Activated T-helper 2 cell treated with anti-CD3 and anti-CD28 coated beads, Interferon-gamma antibody, Interleukin-2, Interleukin-4, amounts not matched to agents 10 μg/mL and 5 μg/mL and 100 μg/mL, durations not matched to agents 14 hours and 24 hours and 36 hours (primary cell): ENCODE measurements at regions of chr2 and their contacts with region 1.

Region 1: GRCh38 chr2:317501-318424 is 29.9 kb upstream of the ALKAL2 start:
- DNase-seq: no peak
- H3K4me3 Mint-ChIP-seq: peak overlapping the region; percentile 55
- H3K27ac Mint-ChIP-seq: peak overlapping the region; percentile 88
- H3K4me1 Mint-ChIP-seq: peaks cover 31% of the 10 kb centered on the region
- H3K27me3 Mint-ChIP-seq: peaks cover 4% of the 10 kb centered on the region

Region 2: GRCh38 chr2:231521-232185 is 86.1 kb before region 1 on chr2:
- intact Hi-C with region 1: loop called (anchors 1 kb)
- DNase-seq: no peak
- H3K4me3 Mint-ChIP-seq: no peak overlapping the region
- H3K27ac Mint-ChIP-seq: peak overlapping the region; percentile 69
- H3K4me1 Mint-ChIP-seq: peaks cover 37% of the 10 kb centered on the region
- H3K27me3 Mint-ChIP-seq: no peaks in the 10 kb centered on the region

Region 3: DNA sequence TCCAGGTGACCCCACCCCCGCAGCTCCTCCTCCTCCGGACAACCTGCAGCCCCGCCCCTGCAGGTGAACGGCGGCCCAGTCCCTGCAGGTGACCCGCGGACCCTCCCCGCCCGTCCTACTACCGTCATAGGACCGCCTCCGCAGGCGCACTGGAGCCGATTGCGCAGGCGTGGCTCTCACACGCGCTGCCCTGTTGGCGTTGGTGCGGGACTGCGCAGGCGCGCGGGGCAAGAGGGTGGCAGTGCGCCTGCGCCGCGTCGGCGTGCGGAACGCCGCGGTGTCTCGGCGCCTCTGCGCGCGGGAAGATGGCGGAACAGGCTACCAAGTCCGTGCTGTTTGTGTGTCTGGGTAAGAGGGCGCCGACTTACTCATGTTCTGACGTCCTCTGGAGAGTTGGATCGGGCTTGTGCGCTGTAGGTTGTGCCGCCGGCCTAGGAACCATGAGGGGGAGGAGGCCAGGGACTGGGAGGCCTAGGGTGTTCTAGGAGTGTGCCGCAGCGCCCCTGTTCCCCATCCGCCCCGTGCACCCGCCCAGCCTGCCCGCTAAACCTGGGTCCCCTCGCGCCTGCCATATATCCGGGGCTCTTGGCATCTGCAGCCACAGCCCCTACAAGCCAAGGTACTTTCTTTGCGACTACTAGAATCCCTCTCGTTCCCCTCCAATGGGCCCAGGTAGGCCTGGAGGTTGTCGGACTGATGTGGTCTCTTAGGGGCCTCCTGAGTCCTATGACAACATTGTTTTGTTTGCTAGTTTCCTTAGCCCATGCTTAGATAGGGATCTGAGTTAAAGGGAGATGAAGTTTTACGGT is 52.9 kb before region 1 on chr2 and contains the start of gene ACP1:
- intact Hi-C with region 1: loop called (anchors 1 kb)
- DNase-seq: peak; percentile 93
- H3K4me3 Mint-ChIP-seq: peak within 1 kb of the TSS; percentile 93
- H3K27ac Mint-ChIP-seq: peak within 1 kb of the TSS; percentile 93
- H3K4me1 Mint-ChIP-seq: peaks cover 48% of the 10 kb centered on the region
- H3K27me3 Mint-ChIP-seq: no peaks in the 10 kb centered on the region
- total RNA-seq, gene ACP1: 168 and 177 TPM in 2 replicates

Region 4: GRCh38 chr2:393711-394696 is 76.2 kb after region 1 on chr2:
- intact Hi-C with region 1: loop called (anchors 5 kb)
- DNase-seq: peak; percentile 68
- H3K4me3 Mint-ChIP-seq: peak overlapping the region; percentile 67
- H3K27ac Mint-ChIP-seq: peak overlapping the region; percentile 72
- H3K4me1 Mint-ChIP-seq: peaks cover 25% of the 10 kb centered on the region
- H3K27me3 Mint-ChIP-seq: no peaks in the 10 kb centered on the region

Region 5: GRCh38 chr2:437762-438393 is 120.1 kb after region 1 on chr2:
- intact Hi-C with region 1: loop called (anchors 10 kb)
- DNase-seq: peak; percentile 68
- H3K4me3 Mint-ChIP-seq: peak overlapping the region; percentile 54
- H3K27ac Mint-ChIP-seq: peak overlapping the region; percentile 67
- H3K4me1 Mint-ChIP-seq: peaks cover 26% of the 10 kb centered on the region
- H3K27me3 Mint-ChIP-seq: peaks cover 5% of the 10 kb centered on the region

Region 6: DNA sequence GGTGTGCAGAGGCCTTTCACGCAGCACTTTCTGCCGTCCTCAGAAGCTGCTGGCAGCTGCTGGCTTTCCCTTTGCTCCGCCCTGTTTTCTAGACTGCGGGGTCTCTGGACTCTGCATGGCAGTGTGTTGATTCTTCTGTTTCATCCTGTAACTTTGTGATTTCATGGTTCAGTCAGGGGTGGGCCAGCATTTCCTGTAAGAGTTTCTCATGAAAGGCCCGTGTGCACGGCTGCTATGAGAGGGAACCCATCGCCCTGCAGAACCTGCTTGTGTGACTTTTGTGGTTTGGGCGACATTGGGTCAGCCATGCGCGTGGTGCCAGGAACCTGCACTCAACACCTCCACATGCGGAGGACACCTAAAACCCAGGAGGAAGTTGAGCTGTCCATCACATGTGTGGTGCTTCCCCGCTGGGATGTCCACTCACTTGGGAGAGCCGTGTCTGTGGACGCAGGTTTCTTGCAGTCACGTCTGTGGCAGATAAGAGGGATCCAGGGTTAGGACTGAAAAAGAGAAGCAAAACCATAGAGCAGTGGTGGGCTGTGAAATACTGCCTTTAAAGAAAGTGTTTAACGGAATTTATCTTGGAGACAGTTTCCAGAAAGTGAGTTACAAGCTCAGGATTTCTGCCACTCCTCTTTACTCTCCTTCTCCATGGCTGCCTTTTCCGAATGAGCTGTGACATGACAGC is 137.4 kb after region 1 on chr2:
- intact Hi-C with region 1: loop called (anchors 5 kb)
- DNase-seq: no peak
- H3K4me3 Mint-ChIP-seq: no peak overlapping the region
- H3K27ac Mint-ChIP-seq: no peak overlapping the region
- H3K4me1 Mint-ChIP-seq: peaks cover 23% of the 10 kb centered on the region
- H3K27me3 Mint-ChIP-seq: peaks cover 23% of the 10 kb centered on the region